ENCODE measurements at regions of chr17 and their contacts with region 1.

Region 1: GRCh38 chr17:80263253-80264204 is 2.9 kb downstream of the RNF213 start:
- DNase-seq: peak; percentile 55 to 94 (median 86)
- ATAC-seq: peak; percentile 32
- H3K4me3 ChIP-seq: peak overlapping the region; percentile 88 to 99
- H3K4me3 Mint-ChIP-seq: peak overlapping the region; percentile 91
- H3K27ac ChIP-seq: peak overlapping the region; percentile 53 to 78
- H3K27ac Mint-ChIP-seq: peak overlapping the region; percentile 90
- H3K4me1 ChIP-seq: peaks cover 62% of the 10 kb centered on the region
- H3K4me1 Mint-ChIP-seq: peaks cover 56% of the 10 kb centered on the region
- H3K27me3 ChIP-seq: no peaks in the 10 kb centered on the region
- H3K27me3 Mint-ChIP-seq: no peaks in the 10 kb centered on the region
- CTCF ChIP-seq: no peak

Region 2: GRCh38 chr17:78781948-78782916 is 1481.3 kb before region 1 on chr17 and contains the start of gene CYTH1:
- CTCF ChIA-PET with region 1: no interaction called
- POLR2A ChIA-PET with region 1: no interaction called
- intact Hi-C with region 1: loop called in 1 of 2 experiments (anchors 5 kb)
- DNase-seq: peak; percentile 93 to 100 (median 98)
- ATAC-seq: peak; percentile 80
- H3K4me3 ChIP-seq: peak within 1 kb of the TSS; percentile 90 to 97
- H3K4me3 Mint-ChIP-seq: peak within 1 kb of the TSS; percentile 93
- H3K27ac ChIP-seq: peak within 1 kb of the TSS; percentile 86 to 93
- H3K27ac Mint-ChIP-seq: peak within 1 kb of the TSS; percentile 90
- H3K4me1 ChIP-seq: peaks cover 67% of the 10 kb centered on the region
- H3K4me1 Mint-ChIP-seq: peaks cover 55% of the 10 kb centered on the region
- H3K27me3 ChIP-seq: no peaks in the 10 kb centered on the region
- H3K27me3 Mint-ChIP-seq: no peaks in the 10 kb centered on the region
- CTCF ChIP-seq: no peak
- total RNA-seq, gene CYTH1: 475 to 490 TPM

Region 3: GRCh38 chr17:79573196-79573896 is 690.2 kb before region 1 on chr17:
- CTCF ChIA-PET with region 1: no interaction called
- POLR2A ChIA-PET with region 1: no interaction called
- intact Hi-C with region 1: no loop called
- DNase-seq: no peak
- ATAC-seq: no peak
- H3K4me3 ChIP-seq: no peak overlapping the region
- H3K4me3 Mint-ChIP-seq: no peak overlapping the region
- H3K27ac ChIP-seq: no peak overlapping the region
- H3K27ac Mint-ChIP-seq: no peak overlapping the region
- H3K4me1 ChIP-seq: no peaks in the 10 kb centered on the region
- H3K4me1 Mint-ChIP-seq: no peaks in the 10 kb centered on the region
- H3K27me3 ChIP-seq: peaks cover 0 to 2% of the 10 kb centered on the region in 2 experiments
- H3K27me3 Mint-ChIP-seq: peaks cover 11% of the 10 kb centered on the region
- CTCF ChIP-seq: no peak

Region 4: GRCh38 chr17:80147035-80147836 is 116.3 kb before region 1 on chr17 and contains the start of gene EIF4A3:
- CTCF ChIA-PET with region 1: no interaction called
- POLR2A ChIA-PET with region 1: no interaction called
- intact Hi-C with region 1: loop called in 1 of 2 experiments (anchors 1 kb)
- DNase-seq: peak; percentile 92 to 100 (median 96)
- ATAC-seq: peak; percentile 91
- H3K4me3 ChIP-seq: peak within 1 kb of the TSS; percentile 85 to 96
- H3K4me3 Mint-ChIP-seq: peak within 1 kb of the TSS; percentile 98
- H3K27ac ChIP-seq: peak within 1 kb of the TSS; percentile 87 to 96
- H3K27ac Mint-ChIP-seq: peak within 1 kb of the TSS; percentile 95
- H3K4me1 ChIP-seq: peaks cover 30% of the 10 kb centered on the region
- H3K4me1 Mint-ChIP-seq: peaks cover 47% of the 10 kb centered on the region
- H3K27me3 ChIP-seq: no peaks in the 10 kb centered on the region
- H3K27me3 Mint-ChIP-seq: no peaks in the 10 kb centered on the region
- CTCF ChIP-seq: no peak
- total RNA-seq, gene EIF4A3: 121 to 123 TPM

Region 5: GRCh38 chr17:80203471-80203963 is 60.0 kb before region 1 on chr17:
- CTCF ChIA-PET with region 1: no interaction called
- POLR2A ChIA-PET with region 1: no interaction called
- intact Hi-C with region 1: no loop called
- DNase-seq: no peak
- ATAC-seq: no peak
- H3K4me3 ChIP-seq: no peak overlapping the region
- H3K4me3 Mint-ChIP-seq: no peak overlapping the region
- H3K27ac ChIP-seq: no peak overlapping the region
- H3K27ac Mint-ChIP-seq: no peak overlapping the region
- H3K4me1 ChIP-seq: no peaks in the 10 kb centered on the region
- H3K4me1 Mint-ChIP-seq: no peaks in the 10 kb centered on the region
- H3K27me3 ChIP-seq: no peaks in the 10 kb centered on the region
- H3K27me3 Mint-ChIP-seq: no peaks in the 10 kb centered on the region
- CTCF ChIP-seq: no peak

Region 6: DNA sequence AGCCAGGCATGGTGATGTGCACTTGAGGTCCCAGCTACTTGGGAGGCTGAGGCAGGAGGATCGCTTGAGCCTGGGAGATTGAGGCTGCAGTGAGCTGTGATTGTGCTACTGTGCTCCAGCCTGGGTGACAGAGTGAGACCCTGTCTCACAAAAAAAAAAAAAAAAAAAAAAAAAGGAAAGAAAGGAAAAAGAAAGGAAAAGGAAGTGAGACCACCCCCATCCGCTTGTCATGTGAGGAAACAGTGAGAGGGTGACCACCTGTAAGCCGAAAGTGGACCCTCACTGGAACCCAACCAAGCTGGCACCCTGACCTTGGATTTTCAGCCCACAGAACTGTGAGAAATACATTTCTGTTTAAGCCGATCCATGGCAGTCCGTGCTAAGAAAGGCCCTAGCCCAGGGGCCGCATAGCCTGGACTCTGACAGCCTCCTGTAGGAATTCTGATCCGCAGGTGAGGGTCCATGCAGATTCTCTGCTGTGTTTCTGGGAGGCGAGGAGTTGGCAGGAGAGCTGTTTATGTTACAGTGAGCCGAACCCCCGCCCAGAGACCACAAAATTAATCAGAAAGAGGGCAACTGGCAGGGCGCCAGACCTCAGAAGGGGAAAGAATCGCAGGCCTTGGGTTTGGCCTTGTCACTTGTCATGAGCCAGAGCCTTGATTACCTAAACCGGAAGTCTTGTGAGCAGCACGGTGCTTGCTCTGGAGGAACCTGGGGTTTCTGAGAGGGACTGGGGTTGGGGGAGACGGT is 44.3 kb before region 1 on chr17:
- CTCF ChIA-PET with region 1: no interaction called
- POLR2A ChIA-PET with region 1: interaction called, 12 read pairs
- intact Hi-C with region 1: loop called (anchors 1 to 2 kb)
- DNase-seq: peak; percentile 84 to 97 (median 95)
- ATAC-seq: peak; percentile 89
- H3K4me3 ChIP-seq: peak overlapping the region; percentile 94 to 96
- H3K4me3 Mint-ChIP-seq: peak overlapping the region; percentile 91
- H3K27ac ChIP-seq: peak overlapping the region; percentile 86 to 91
- H3K27ac Mint-ChIP-seq: peak overlapping the region; percentile 96
- H3K4me1 ChIP-seq: peaks cover 32% of the 10 kb centered on the region
- H3K4me1 Mint-ChIP-seq: peaks cover 36% of the 10 kb centered on the region
- H3K27me3 ChIP-seq: no peaks in the 10 kb centered on the region
- H3K27me3 Mint-ChIP-seq: no peaks in the 10 kb centered on the region
- CTCF ChIP-seq: no peak

Region 7: DNA sequence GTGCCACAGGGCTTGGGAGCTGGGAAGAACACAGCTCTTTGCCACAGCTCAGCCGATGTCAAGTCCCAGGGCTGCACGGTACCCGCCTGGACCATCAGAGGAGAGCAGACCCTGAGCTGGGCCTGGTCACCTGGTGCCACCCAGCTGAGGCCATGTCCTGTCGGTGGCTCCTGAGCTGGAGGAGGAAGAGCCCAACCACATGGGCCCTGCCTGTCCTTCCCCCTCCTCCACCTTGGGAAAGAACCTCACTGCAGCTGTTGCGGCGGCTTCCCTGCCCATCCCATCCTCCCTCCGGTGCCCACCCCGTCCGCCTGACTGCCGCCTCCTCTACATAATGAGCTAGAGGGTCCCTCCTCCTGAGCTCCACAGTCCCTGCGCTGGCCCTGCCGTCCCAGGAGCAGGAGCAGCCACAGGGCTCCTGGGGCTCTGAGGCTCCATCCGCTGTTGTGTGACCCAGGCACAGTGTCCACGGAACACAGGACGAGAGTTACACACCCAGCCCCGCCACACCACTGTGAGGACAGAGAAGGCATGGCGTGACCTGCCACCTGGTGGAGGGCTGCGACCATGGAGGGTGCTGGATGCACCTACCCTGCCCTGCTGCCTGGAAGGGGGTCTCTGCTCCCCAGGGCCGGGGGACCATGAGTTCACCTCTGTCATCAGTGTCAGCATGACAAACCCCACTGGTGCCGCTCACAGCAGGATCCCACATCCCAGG is 706.7 kb after region 1 on chr17:
- CTCF ChIA-PET with region 1: no interaction called
- POLR2A ChIA-PET with region 1: no interaction called
- intact Hi-C with region 1: no loop called
- DNase-seq: peak in 7 of 9 experiments; percentile 18 to 68 (median 52)
- ATAC-seq: peak; percentile 70
- H3K4me3 ChIP-seq: no peak overlapping the region
- H3K4me3 Mint-ChIP-seq: no peak overlapping the region
- H3K27ac ChIP-seq: no peak overlapping the region
- H3K27ac Mint-ChIP-seq: no peak overlapping the region
- H3K4me1 ChIP-seq: peaks cover 19% of the 10 kb centered on the region
- H3K4me1 Mint-ChIP-seq: peaks cover 5% of the 10 kb centered on the region
- H3K27me3 ChIP-seq: no peaks in the 10 kb centered on the region
- H3K27me3 Mint-ChIP-seq: no peaks in the 10 kb centered on the region
- CTCF ChIP-seq: peak; percentile 26

Region 8: GRCh38 chr17:81512560-81513371 is 1249.2 kb after region 1 on chr17 and contains the start of gene ACTG1:
- CTCF ChIA-PET with region 1: no interaction called
- POLR2A ChIA-PET with region 1: interaction called, 3 read pairs
- intact Hi-C with region 1: loop called in 1 of 2 experiments (anchors 10 kb)
- DNase-seq: peak; percentile 87 to 97 (median 92)
- ATAC-seq: peak; percentile 60
- H3K4me3 ChIP-seq: peak within 1 kb of the TSS; percentile 84 to 93
- H3K4me3 Mint-ChIP-seq: peak within 1 kb of the TSS; percentile 98
- H3K27ac ChIP-seq: peak within 1 kb of the TSS; percentile 56 to 93
- H3K27ac Mint-ChIP-seq: peak within 1 kb of the TSS; percentile 98
- H3K4me1 ChIP-seq: peaks cover 49% of the 10 kb centered on the region
- H3K4me1 Mint-ChIP-seq: peaks cover 57% of the 10 kb centered on the region
- H3K27me3 ChIP-seq: no peaks in the 10 kb centered on the region
- H3K27me3 Mint-ChIP-seq: no peaks in the 10 kb centered on the region
- CTCF ChIP-seq: no peak
- total RNA-seq, gene ACTG1: 1,370 to 1,375 TPM